CD8-positive, alpha-beta T cell (primary cell): ENCODE measurements at regions of chr6 and their contacts with region 1.

Region 1: GRCh38 chr6:81752138-81752920 is at the start of gene TENT5A:
- DNase-seq: peak; percentile 69 to 92 (median 85)
- ATAC-seq: peak; percentile 77
- H3K4me3 ChIP-seq: peak within 1 kb of the TSS; percentile 89 to 97
- H3K4me3 Mint-ChIP-seq: peak within 1 kb of the TSS; percentile 96
- H3K27ac ChIP-seq: peak within 1 kb of the TSS; percentile 82 to 87
- H3K27ac Mint-ChIP-seq: peak within 1 kb of the TSS; percentile 95
- H3K4me1 ChIP-seq: peaks cover 25% of the 10 kb centered on the region
- H3K4me1 Mint-ChIP-seq: peaks cover 41% of the 10 kb centered on the region
- H3K27me3 ChIP-seq: no peaks in the 10 kb centered on the region
- H3K27me3 Mint-ChIP-seq: peaks cover 13% of the 10 kb centered on the region
- CTCF ChIP-seq: no peak
- total RNA-seq, gene TENT5A: 7.5 to 7.7 TPM

Region 2: DNA sequence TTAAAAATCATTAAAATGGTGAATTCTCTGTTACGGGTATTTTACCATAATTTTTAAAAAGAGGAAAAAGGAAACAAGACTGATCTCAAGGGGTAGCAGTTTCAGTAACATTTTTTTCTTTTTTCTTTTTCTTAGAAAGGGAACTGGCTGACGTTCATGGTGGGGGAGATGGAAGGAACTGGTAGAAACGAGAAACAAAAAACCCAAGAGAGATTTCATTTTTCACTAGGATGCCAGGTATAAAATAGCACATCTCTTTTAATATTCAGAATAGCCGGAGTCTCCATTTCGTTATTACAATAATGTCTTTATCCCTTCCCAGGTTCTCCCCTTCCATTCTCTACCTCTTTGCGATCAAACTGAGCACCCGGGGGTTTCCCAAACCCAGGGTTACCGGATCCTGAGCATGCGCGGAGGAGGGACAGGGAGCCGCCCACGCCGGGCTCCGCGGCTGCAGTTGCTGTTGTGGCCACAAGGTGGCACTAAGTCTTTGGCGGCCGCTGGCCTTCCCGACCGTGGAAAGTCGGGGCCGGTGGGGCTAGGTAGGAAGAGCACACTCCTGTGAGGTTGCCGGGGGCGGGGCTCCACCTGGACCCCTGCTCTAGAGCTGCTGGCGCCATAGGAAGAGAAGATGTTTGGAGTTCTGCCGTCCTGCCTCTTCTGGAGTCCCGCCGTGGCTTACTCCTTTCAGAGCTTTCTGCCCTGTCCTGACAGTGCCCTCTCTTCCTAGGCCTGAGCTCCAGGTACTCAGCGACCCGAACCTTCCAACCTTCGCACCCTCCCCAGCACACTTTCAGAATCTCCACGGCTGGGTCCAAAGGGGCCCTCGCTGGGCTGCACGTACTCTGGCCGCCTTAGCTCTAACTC is 1974.4 kb before region 1 on chr6:
- CTCF ChIA-PET with region 1: no interaction called
- POLR2A ChIA-PET with region 1: no interaction called
- intact Hi-C with region 1: loop called (anchors 1 kb)
- DNase-seq: peak; percentile 65 to 90 (median 82)
- ATAC-seq: peak; percentile 97
- H3K4me3 ChIP-seq: peak overlapping the region; percentile 36 to 38
- H3K4me3 Mint-ChIP-seq: peak overlapping the region; percentile 78
- H3K27ac ChIP-seq: no peak overlapping the region
- H3K27ac Mint-ChIP-seq: no peak overlapping the region
- H3K4me1 ChIP-seq: peaks cover 4% of the 10 kb centered on the region
- H3K4me1 Mint-ChIP-seq: peaks cover 6% of the 10 kb centered on the region
- H3K27me3 ChIP-seq: no peaks in the 10 kb centered on the region
- H3K27me3 Mint-ChIP-seq: peaks cover 2% of the 10 kb centered on the region
- CTCF ChIP-seq: peak; percentile 94

Region 3: GRCh38 chr6:79949233-79949632 is 1803.1 kb before region 1 on chr6:
- CTCF ChIA-PET with region 1: no interaction called
- POLR2A ChIA-PET with region 1: no interaction called
- intact Hi-C with region 1: loop called in 1 of 2 experiments (anchors 5 kb)
- DNase-seq: peak in 7 of 9 experiments; percentile 25 to 88 (median 57)
- ATAC-seq: peak; percentile 24
- H3K4me3 ChIP-seq: no peak overlapping the region
- H3K4me3 Mint-ChIP-seq: peak overlapping the region; percentile 9
- H3K27ac ChIP-seq: no peak overlapping the region
- H3K27ac Mint-ChIP-seq: peak overlapping the region; percentile 5
- H3K4me1 ChIP-seq: peaks cover 16% of the 10 kb centered on the region
- H3K4me1 Mint-ChIP-seq: peaks cover 27% of the 10 kb centered on the region
- H3K27me3 ChIP-seq: no peaks in the 10 kb centered on the region
- H3K27me3 Mint-ChIP-seq: peaks cover 2% of the 10 kb centered on the region
- CTCF ChIP-seq: peak; percentile 80

Region 4: DNA sequence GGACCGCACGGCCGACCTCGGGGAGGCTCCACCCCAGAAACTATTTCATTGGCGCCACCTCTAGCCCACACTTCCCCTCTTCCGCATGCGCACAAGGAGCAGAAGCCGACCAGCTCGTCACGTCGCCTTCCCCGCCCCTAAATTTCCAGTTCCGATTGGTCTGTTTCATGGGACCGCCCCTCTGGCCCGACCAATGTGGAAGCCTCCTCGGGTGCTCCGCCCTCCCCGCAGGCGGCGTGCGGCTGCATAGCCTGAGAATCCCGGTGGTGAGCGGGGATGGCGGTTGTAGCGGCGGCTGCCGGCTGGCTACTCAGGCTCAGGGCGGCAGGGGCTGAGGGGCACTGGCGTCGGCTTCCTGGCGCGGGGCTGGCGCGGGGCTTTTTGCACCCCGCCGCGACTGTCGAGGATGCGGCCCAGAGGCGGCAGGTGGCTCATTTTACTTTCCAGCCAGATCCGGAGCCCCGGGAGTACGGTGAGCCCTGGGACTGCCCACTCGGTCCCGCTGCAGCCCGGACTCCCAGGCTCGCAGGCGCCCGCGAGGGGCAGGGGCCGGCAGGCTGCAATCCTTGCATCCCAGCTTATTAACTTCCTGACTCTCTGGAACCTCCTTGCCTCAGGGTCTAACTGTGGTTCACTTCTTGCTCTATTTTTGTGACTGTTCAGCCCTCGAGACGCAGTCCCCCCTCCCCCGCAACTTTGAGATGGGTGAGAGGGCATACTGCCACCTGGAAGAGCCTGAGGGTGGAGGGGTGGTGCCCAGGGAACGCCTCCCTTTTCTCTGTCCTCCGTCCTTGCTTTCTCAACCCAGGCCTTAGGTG is 1645.7 kb before region 1 on chr6 and contains the start of gene BCKDHB:
- CTCF ChIA-PET with region 1: no interaction called
- POLR2A ChIA-PET with region 1: no interaction called
- intact Hi-C with region 1: loop called (anchors 1 to 2 kb)
- DNase-seq: peak; percentile 95 to 99 (median 97)
- ATAC-seq: peak; percentile 97
- H3K4me3 ChIP-seq: peak within 1 kb of the TSS; percentile 71 to 81
- H3K4me3 Mint-ChIP-seq: peak within 1 kb of the TSS; percentile 93
- H3K27ac ChIP-seq: peak within 1 kb of the TSS; percentile 39 to 67
- H3K27ac Mint-ChIP-seq: peak within 1 kb of the TSS; percentile 91
- H3K4me1 ChIP-seq: peaks cover 15% of the 10 kb centered on the region
- H3K4me1 Mint-ChIP-seq: peaks cover 25% of the 10 kb centered on the region
- H3K27me3 ChIP-seq: no peaks in the 10 kb centered on the region
- H3K27me3 Mint-ChIP-seq: no peaks in the 10 kb centered on the region
- CTCF ChIP-seq: no peak
- total RNA-seq, gene BCKDHB: 8.2 to 8.3 TPM

Region 5: GRCh38 chr6:80214436-80215022 is 1537.8 kb before region 1 on chr6:
- CTCF ChIA-PET with region 1: interaction called, 3 read pairs
- POLR2A ChIA-PET with region 1: no interaction called
- intact Hi-C with region 1: loop called (anchors 2 kb)
- DNase-seq: peak in 3 of 9 experiments; percentile 8 to 32 (median 23)
- ATAC-seq: no peak
- H3K4me3 ChIP-seq: no peak overlapping the region
- H3K4me3 Mint-ChIP-seq: no peak overlapping the region
- H3K27ac ChIP-seq: no peak overlapping the region
- H3K27ac Mint-ChIP-seq: no peak overlapping the region
- H3K4me1 ChIP-seq: no peaks in the 10 kb centered on the region
- H3K4me1 Mint-ChIP-seq: no peaks in the 10 kb centered on the region
- H3K27me3 ChIP-seq: no peaks in the 10 kb centered on the region
- H3K27me3 Mint-ChIP-seq: no peaks in the 10 kb centered on the region
- CTCF ChIP-seq: peak; percentile 53

Region 6: DNA sequence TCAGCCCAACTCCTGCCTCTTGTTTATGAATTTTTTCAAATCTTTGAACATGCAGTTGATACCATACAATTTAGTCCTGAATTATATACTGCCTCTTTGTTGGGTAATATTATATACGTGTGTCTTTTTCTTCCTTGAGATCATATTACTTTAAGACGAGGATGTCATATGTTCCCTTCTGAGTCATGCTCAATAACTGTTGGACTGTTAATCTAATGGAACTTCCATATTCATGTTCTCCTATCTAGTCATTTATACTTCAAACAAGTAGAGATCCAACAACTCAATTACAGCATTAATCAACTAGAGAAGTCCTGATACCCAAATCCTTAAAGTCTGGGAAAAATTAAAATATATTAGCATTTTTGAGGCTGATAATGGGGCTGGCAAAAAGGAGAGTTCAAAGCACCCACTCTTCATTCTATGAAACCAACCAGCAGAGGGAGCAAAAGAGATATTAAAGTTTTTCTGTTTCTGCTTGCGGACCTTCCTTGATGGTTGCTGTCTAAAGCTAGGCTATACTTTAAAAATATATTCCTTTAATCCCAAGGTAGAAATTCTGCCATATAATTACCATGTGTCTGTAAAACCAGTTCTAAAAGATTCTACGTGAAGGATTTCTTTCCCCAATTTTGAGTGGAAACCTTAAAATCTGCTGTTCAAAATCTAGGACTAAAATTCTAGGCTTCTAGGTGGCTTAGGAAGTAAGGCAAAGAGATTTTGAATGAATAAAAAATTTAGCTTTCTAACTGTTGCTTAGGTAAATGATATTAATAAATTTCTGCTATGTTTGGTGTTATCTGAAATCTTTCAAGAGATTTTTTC is 1147.0 kb before region 1 on chr6:
- CTCF ChIA-PET with region 1: interaction called, 9 read pairs
- POLR2A ChIA-PET with region 1: interaction called, 3 read pairs
- intact Hi-C with region 1: loop called in 1 of 2 experiments (anchors 2 kb)
- DNase-seq: peak in 2 of 9 experiments; percentile 26 to 29
- ATAC-seq: no peak
- H3K4me3 ChIP-seq: no peak overlapping the region
- H3K4me3 Mint-ChIP-seq: no peak overlapping the region
- H3K27ac ChIP-seq: no peak overlapping the region
- H3K27ac Mint-ChIP-seq: no peak overlapping the region
- H3K4me1 ChIP-seq: no peaks in the 10 kb centered on the region
- H3K4me1 Mint-ChIP-seq: no peaks in the 10 kb centered on the region
- H3K27me3 ChIP-seq: no peaks in the 10 kb centered on the region
- H3K27me3 Mint-ChIP-seq: peaks cover 4% of the 10 kb centered on the region
- CTCF ChIP-seq: no peak

Region 7: GRCh38 chr6:81969814-81970213 is 217.5 kb after region 1 on chr6:
- CTCF ChIA-PET with region 1: no interaction called
- POLR2A ChIA-PET with region 1: no interaction called
- intact Hi-C with region 1: no loop called
- DNase-seq: no peak
- ATAC-seq: no peak
- H3K4me3 ChIP-seq: no peak overlapping the region
- H3K4me3 Mint-ChIP-seq: no peak overlapping the region
- H3K27ac ChIP-seq: no peak overlapping the region
- H3K27ac Mint-ChIP-seq: no peak overlapping the region
- H3K4me1 ChIP-seq: no peaks in the 10 kb centered on the region
- H3K4me1 Mint-ChIP-seq: no peaks in the 10 kb centered on the region
- H3K27me3 ChIP-seq: no peaks in the 10 kb centered on the region
- H3K27me3 Mint-ChIP-seq: no peaks in the 10 kb centered on the region
- CTCF ChIP-seq: no peak

Region 8: GRCh38 chr6:83067448-83068413 is 1315.4 kb after region 1 on chr6 and contains the start of gene DOP1A:
- CTCF ChIA-PET with region 1: interaction called, 4 read pairs
- POLR2A ChIA-PET with region 1: no interaction called
- intact Hi-C with region 1: loop called in 1 of 2 experiments (anchors 10 kb)
- DNase-seq: peak; percentile 92 to 98 (median 97)
- ATAC-seq: peak; percentile 86
- H3K4me3 ChIP-seq: peak within 1 kb of the TSS; percentile 78 to 82
- H3K4me3 Mint-ChIP-seq: peak within 1 kb of the TSS; percentile 95
- H3K27ac ChIP-seq: peak within 1 kb of the TSS; percentile 87 to 91
- H3K27ac Mint-ChIP-seq: peak within 1 kb of the TSS; percentile 97
- H3K4me1 ChIP-seq: peaks cover 23% of the 10 kb centered on the region
- H3K4me1 Mint-ChIP-seq: peaks cover 58% of the 10 kb centered on the region
- H3K27me3 ChIP-seq: no peaks in the 10 kb centered on the region
- H3K27me3 Mint-ChIP-seq: no peaks in the 10 kb centered on the region
- CTCF ChIP-seq: peak; percentile 91
- total RNA-seq, gene DOP1A: 12.1 to 12.3 TPM